GM12878 (cell line): ENCODE measurements at regions of chr12 and their contacts with region 1.

Region 1: GRCh38 chr12:110513842-110514241 is 11.7 kb downstream of the RAD9B start:
- DNase-seq: no peak
- ATAC-seq: no peak
- H3K4me3 ChIP-seq: no peak overlapping the region
- H3K27ac ChIP-seq: no peak overlapping the region
- H3K4me1 ChIP-seq: no peaks in the 10 kb centered on the region
- H3K27me3 ChIP-seq: no peaks in the 10 kb centered on the region
- CTCF ChIP-seq: no peak
- EP300 ChIP-seq: no peak
- POLR2A ChIP-seq: no peak
- RAD21 ChIP-seq: no peak

Region 2: DNA sequence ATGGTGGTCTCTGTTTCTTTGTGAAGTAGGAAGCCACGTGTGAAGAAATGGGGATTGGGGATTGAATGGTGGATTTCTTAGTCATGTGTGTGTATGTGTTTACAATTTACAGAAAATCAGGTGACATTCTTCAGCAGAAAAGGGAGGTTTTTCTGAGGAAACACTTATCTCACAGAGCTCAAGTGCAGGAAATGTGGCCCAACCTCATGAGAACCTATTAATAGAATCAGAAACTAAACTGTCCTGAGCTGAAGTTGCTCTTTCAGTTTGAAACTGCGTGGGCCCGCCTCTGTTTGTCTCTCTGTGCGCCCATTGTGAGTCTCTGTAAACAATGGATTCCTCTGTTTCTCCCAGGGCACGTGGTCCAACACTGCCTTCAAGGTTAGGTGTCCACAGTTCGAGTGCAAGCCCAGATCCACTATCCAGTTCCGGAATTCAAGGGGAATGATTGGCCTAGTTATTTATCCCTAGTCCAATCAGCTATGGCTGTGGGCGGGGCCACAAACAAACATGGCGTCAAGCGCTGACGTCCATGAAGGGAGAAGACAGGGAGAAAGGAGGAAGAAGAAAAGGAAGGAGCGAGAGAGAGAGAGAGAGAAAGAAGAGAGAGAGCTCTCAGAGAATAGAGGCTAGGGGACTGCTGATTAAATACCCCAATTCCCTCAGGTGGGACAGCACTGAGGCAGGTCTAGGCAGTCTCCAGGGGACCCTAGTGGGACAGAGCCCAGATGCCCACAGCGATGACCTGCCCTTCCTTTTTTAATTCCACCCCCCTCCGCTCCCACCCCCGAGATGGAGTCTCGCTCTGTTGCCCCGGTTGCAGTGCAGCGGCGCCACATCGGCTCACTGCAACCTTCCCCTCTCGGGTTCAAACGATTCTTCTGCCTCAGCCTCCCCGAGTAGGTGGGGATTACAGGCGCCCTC is 434.1 kb before region 1 on chr12:
- CTCF ChIA-PET with region 1: no interaction called
- POLR2A ChIA-PET with region 1: no interaction called
- RAD21 ChIA-PET with region 1: no interaction called
- SMC1A ChIA-PET with region 1: no interaction called
- in situ Hi-C with region 1: no loop called
- intact Hi-C with region 1: no loop called
- DNase-seq: peak; percentile 86
- ATAC-seq: peak; percentile 98
- H3K4me3 ChIP-seq: peak overlapping the region; percentile 38; the same call in 1 of the 2 replicates
- H3K27ac ChIP-seq: peak overlapping the region; percentile 88
- H3K4me1 ChIP-seq: peaks cover 19% of the 10 kb centered on the region
- H3K27me3 ChIP-seq: no peaks in the 10 kb centered on the region
- CTCF ChIP-seq: no peak
- EP300 ChIP-seq: 0 out of 4 replicates have a peak, but pooled peaks of 1 of the 2 experiments have one; percentile 33
- POLR2A ChIP-seq: peak; percentile 71
- RAD21 ChIP-seq: no peak

Region 3: GRCh38 chr12:110537605-110538409 is 24.0 kb after region 1 on chr12:
- CTCF ChIA-PET with region 1: interaction called, 34 read pairs
- POLR2A ChIA-PET with region 1: interaction called, 13 read pairs
- RAD21 ChIA-PET with region 1: interaction called, 30 read pairs
- SMC1A ChIA-PET with region 1: interaction called, 162 read pairs
- in situ Hi-C with region 1: no loop called
- intact Hi-C with region 1: no loop called
- DNase-seq: no peak
- ATAC-seq: no peak
- H3K4me3 ChIP-seq: no peak overlapping the region
- H3K27ac ChIP-seq: no peak overlapping the region
- H3K4me1 ChIP-seq: peaks cover 53% of the 10 kb centered on the region
- H3K27me3 ChIP-seq: no peaks in the 10 kb centered on the region
- CTCF ChIP-seq: no peak
- EP300 ChIP-seq: no peak
- POLR2A ChIP-seq: peak; percentile 30; the same call in 1 of the 2 replicates
- RAD21 ChIP-seq: no peak

Region 4: GRCh38 chr12:110548678-110549077 is 34.8 kb after region 1 on chr12:
- CTCF ChIA-PET with region 1: interaction called, 29 read pairs
- POLR2A ChIA-PET with region 1: interaction called, 3 read pairs
- RAD21 ChIA-PET with region 1: interaction called, 13 read pairs
- SMC1A ChIA-PET with region 1: interaction called, 19 read pairs
- in situ Hi-C with region 1: no loop called
- intact Hi-C with region 1: loop called (anchors 5 kb)
- DNase-seq: no peak
- ATAC-seq: no peak
- H3K4me3 ChIP-seq: no peak overlapping the region
- H3K27ac ChIP-seq: peak overlapping the region; percentile 31; the same call in 1 of the 2 replicates
- H3K4me1 ChIP-seq: peaks cover 16% of the 10 kb centered on the region
- H3K27me3 ChIP-seq: no peaks in the 10 kb centered on the region
- CTCF ChIP-seq: no peak
- EP300 ChIP-seq: no peak
- POLR2A ChIP-seq: no peak
- RAD21 ChIP-seq: no peak

Region 5: GRCh38 chr12:110583137-110584059 is 69.6 kb after region 1 on chr12 and contains the start of gene PPTC7:
- CTCF ChIA-PET with region 1: interaction called, 5 read pairs
- POLR2A ChIA-PET with region 1: interaction called, 3 read pairs
- RAD21 ChIA-PET with region 1: interaction called, 14 read pairs
- SMC1A ChIA-PET with region 1: interaction called, 25 read pairs
- in situ Hi-C with region 1: no loop called
- intact Hi-C with region 1: no loop called
- DNase-seq: peak; percentile 91
- ATAC-seq: peak; percentile 85
- H3K4me3 ChIP-seq: peak within 1 kb of the TSS; percentile 82
- H3K27ac ChIP-seq: peak within 1 kb of the TSS; percentile 95
- H3K4me1 ChIP-seq: peaks cover 36% of the 10 kb centered on the region
- H3K27me3 ChIP-seq: no peaks in the 10 kb centered on the region
- CTCF ChIP-seq: no peak
- EP300 ChIP-seq: no peak
- POLR2A ChIP-seq: peak; percentile 72
- RAD21 ChIP-seq: no peak
- polyA plus RNA-seq, gene PPTC7: 5.0 to 8.9 TPM

Region 6: GRCh38 chr12:110627500-110628195 is 113.8 kb after region 1 on chr12:
- CTCF ChIA-PET with region 1: no interaction called
- POLR2A ChIA-PET with region 1: no interaction called
- RAD21 ChIA-PET with region 1: no interaction called
- SMC1A ChIA-PET with region 1: no interaction called
- in situ Hi-C with region 1: no loop called
- intact Hi-C with region 1: no loop called
- DNase-seq: no peak
- ATAC-seq: peak; percentile 77
- H3K4me3 ChIP-seq: peak overlapping the region; percentile 23; the same call in 1 of the 2 replicates
- H3K27ac ChIP-seq: peak overlapping the region; percentile 16
- H3K4me1 ChIP-seq: peaks cover 11% of the 10 kb centered on the region
- H3K27me3 ChIP-seq: no peaks in the 10 kb centered on the region
- CTCF ChIP-seq: no peak
- EP300 ChIP-seq: no peak
- POLR2A ChIP-seq: no peak
- RAD21 ChIP-seq: no peak

Region 7: GRCh38 chr12:110726708-110727369 is 213.0 kb after region 1 on chr12:
- CTCF ChIA-PET with region 1: no interaction called
- POLR2A ChIA-PET with region 1: no interaction called
- RAD21 ChIA-PET with region 1: no interaction called
- SMC1A ChIA-PET with region 1: no interaction called
- in situ Hi-C with region 1: no loop called
- intact Hi-C with region 1: no loop called
- DNase-seq: no peak
- ATAC-seq: peak; percentile 55
- H3K4me3 ChIP-seq: no peak overlapping the region; the same call in 1 of the 2 replicates
- H3K27ac ChIP-seq: peak overlapping the region; percentile 38
- H3K4me1 ChIP-seq: peaks cover 16% of the 10 kb centered on the region
- H3K27me3 ChIP-seq: no peaks in the 10 kb centered on the region
- CTCF ChIP-seq: no peak
- EP300 ChIP-seq: no peak
- POLR2A ChIP-seq: no peak
- RAD21 ChIP-seq: no peak

Region 8: GRCh38 chr12:110888256-110888991 is 374.6 kb after region 1 on chr12:
- CTCF ChIA-PET with region 1: interaction called, 6 read pairs
- POLR2A ChIA-PET with region 1: no interaction called
- RAD21 ChIA-PET with region 1: interaction called, 3 read pairs
- SMC1A ChIA-PET with region 1: no interaction called
- in situ Hi-C with region 1: no loop called
- intact Hi-C with region 1: loop called (anchors 5 kb)
- DNase-seq: no peak
- ATAC-seq: no peak
- H3K4me3 ChIP-seq: no peak overlapping the region
- H3K27ac ChIP-seq: no peak overlapping the region
- H3K4me1 ChIP-seq: no peaks in the 10 kb centered on the region
- H3K27me3 ChIP-seq: no peaks in the 10 kb centered on the region; a peak in 1 of 4 replicates
- CTCF ChIP-seq: no peak
- EP300 ChIP-seq: no peak
- POLR2A ChIP-seq: no peak
- RAD21 ChIP-seq: no peak

Region 9: DNA sequence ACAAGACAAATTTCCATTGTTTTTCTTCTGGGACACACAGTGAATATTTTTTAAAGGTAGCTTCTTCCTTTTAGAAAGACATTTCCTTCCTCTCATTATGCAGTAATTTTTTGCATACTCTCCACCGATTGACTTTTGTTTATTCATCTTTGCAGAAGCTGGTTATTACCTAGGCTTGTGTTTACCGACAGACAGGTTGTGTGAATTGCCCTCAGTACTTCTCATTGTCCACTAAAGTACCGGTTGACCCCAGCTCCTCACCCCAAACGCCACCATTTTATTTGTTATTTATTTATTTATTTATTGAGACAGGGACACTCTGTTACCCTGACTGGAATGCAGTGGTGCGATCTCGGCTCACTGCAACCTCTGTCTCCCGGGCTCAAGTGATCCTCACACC is 470.0 kb after region 1 on chr12:
- CTCF ChIA-PET with region 1: no interaction called
- POLR2A ChIA-PET with region 1: no interaction called
- RAD21 ChIA-PET with region 1: no interaction called
- SMC1A ChIA-PET with region 1: no interaction called
- in situ Hi-C with region 1: no loop called
- intact Hi-C with region 1: no loop called
- DNase-seq: no peak
- ATAC-seq: no peak
- H3K4me3 ChIP-seq: no peak overlapping the region
- H3K27ac ChIP-seq: no peak overlapping the region
- H3K4me1 ChIP-seq: no peaks in the 10 kb centered on the region
- H3K27me3 ChIP-seq: no peaks in the 10 kb centered on the region; a peak in 1 of 4 replicates
- CTCF ChIP-seq: no peak
- EP300 ChIP-seq: no peak
- POLR2A ChIP-seq: no peak
- RAD21 ChIP-seq: no peak